Caco-2 (cell line): ENCODE measurements at regions of chr6 and their contacts with region 1.

Region 1: GRCh38 chr6:113306552-113307145 is 550.5 kb upstream of the MARCKS start:
- DNase-seq: peak; percentile 55 to 64
- H3K4me3 ChIP-seq: no peak overlapping the region
- H3K4me3 Mint-ChIP-seq: no peak overlapping the region
- H3K27ac Mint-ChIP-seq: no peak overlapping the region
- H3K4me1 ChIP-seq: peaks cover 6% of the 10 kb centered on the region; the same call in 1 of the 2 replicates
- H3K4me1 Mint-ChIP-seq: peaks cover 7% of the 10 kb centered on the region
- H3K27me3 ChIP-seq: no peaks in the 10 kb centered on the region
- H3K27me3 Mint-ChIP-seq: no peaks in the 10 kb centered on the region
- CTCF ChIP-seq: peak; percentile 64 to 68

Region 2: DNA sequence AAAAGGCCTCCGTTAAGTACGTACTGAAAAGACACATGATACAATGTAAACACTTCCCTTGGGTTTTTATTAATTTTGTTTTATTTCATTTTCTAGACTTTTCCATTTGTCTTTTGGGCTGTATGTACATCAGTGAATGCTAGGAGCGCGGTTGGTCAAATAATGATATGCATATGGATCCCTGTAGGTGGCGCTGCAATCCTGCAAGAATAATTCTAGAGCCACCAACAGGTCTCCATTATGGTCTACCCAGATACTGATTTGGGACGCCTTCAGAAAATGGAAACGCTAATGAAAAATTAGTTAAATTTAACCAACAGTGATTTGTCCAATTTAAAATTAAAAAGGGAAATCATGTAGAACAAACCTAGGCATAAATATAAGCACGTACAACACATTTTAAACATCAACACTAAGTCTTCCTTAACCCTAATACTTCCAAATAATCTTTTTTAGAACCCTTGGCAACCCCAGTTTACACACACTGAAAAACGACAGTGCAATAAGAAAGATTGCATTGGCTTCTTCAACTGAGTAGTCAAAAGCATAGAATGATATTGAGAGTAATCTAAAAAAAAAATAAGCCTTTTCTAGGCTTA is 526.1 kb before region 1 on chr6:
- CTCF ChIA-PET with region 1: no interaction called
- POLR2A ChIA-PET with region 1: no interaction called
- intact Hi-C with region 1: loop called (anchors 2 kb)
- DNase-seq: peak; percentile 62 to 74
- H3K4me3 ChIP-seq: no peak overlapping the region
- H3K4me3 Mint-ChIP-seq: no peak overlapping the region
- H3K27ac Mint-ChIP-seq: no peak overlapping the region
- H3K4me1 ChIP-seq: no peaks in the 10 kb centered on the region
- H3K4me1 Mint-ChIP-seq: no peaks in the 10 kb centered on the region
- H3K27me3 ChIP-seq: no peaks in the 10 kb centered on the region
- H3K27me3 Mint-ChIP-seq: peaks cover 5% of the 10 kb centered on the region
- CTCF ChIP-seq: peak; percentile 74 to 84

Region 3: GRCh38 chr6:113414511-113414910 is 107.9 kb after region 1 on chr6:
- CTCF ChIA-PET with region 1: no interaction called
- POLR2A ChIA-PET with region 1: no interaction called
- intact Hi-C with region 1: loop called (anchors 2 kb)
- DNase-seq: peak; percentile 39 to 45
- H3K4me3 ChIP-seq: no peak overlapping the region
- H3K4me3 Mint-ChIP-seq: no peak overlapping the region
- H3K27ac Mint-ChIP-seq: no peak overlapping the region
- H3K4me1 ChIP-seq: peaks cover 8% of the 10 kb centered on the region; the same call in 1 of the 2 replicates
- H3K4me1 Mint-ChIP-seq: peaks cover 13% of the 10 kb centered on the region
- H3K27me3 ChIP-seq: no peaks in the 10 kb centered on the region
- H3K27me3 Mint-ChIP-seq: no peaks in the 10 kb centered on the region
- CTCF ChIP-seq: peak in 1 of 2 experiments; percentile 50

Region 4: GRCh38 chr6:113461153-113461932 is 154.7 kb after region 1 on chr6:
- CTCF ChIA-PET with region 1: interaction called, 6 read pairs
- POLR2A ChIA-PET with region 1: no interaction called
- intact Hi-C with region 1: loop called (anchors 1 kb)
- DNase-seq: peak in 1 of 2 experiments; percentile 2
- H3K4me3 ChIP-seq: no peak overlapping the region
- H3K4me3 Mint-ChIP-seq: no peak overlapping the region
- H3K27ac Mint-ChIP-seq: no peak overlapping the region
- H3K4me1 ChIP-seq: 0 out of 2 replicates have a peak, but pooled peaks cover 3% of the 10 kb centered on the region
- H3K4me1 Mint-ChIP-seq: peaks cover 8% of the 10 kb centered on the region
- H3K27me3 ChIP-seq: no peaks in the 10 kb centered on the region
- H3K27me3 Mint-ChIP-seq: no peaks in the 10 kb centered on the region
- CTCF ChIP-seq: peak in 1 of 2 experiments; percentile 42

Region 5: DNA sequence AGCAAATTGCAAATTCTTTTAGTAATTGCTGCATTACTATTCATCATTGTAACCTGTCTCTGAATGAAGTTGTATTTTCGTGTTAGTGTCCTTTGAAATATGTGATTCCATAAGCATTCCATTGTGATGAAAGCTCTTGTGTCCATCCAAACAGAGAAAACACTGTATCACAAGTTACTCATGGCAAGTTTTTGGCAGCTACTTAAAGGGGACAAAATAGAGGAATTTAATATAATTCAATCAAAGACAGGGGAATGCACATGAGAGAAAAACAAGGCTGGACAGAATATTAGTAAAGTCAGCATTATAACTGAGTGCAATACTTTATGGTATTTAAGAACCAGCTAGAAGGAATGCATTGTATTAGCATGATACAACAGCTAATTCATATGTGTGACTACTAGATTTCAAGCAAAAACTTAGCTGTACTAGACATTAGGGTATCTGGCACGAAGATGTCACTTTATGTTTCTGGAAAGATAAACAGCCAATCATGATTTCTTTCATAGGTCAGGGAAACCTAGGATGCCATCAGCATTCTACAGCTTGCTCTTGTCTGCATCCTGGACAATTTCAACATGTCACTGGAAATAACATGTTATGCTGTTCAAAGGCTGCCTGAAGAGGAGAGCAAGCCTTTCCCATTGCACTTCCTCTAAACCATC is 279.9 kb after region 1 on chr6:
- CTCF ChIA-PET with region 1: no interaction called
- POLR2A ChIA-PET with region 1: no interaction called
- intact Hi-C with region 1: loop called (anchors 10 kb)
- DNase-seq: no peak
- H3K4me3 ChIP-seq: no peak overlapping the region
- H3K4me3 Mint-ChIP-seq: no peak overlapping the region
- H3K27ac Mint-ChIP-seq: no peak overlapping the region
- H3K4me1 ChIP-seq: no peaks in the 10 kb centered on the region
- H3K4me1 Mint-ChIP-seq: no peaks in the 10 kb centered on the region
- H3K27me3 ChIP-seq: no peaks in the 10 kb centered on the region
- H3K27me3 Mint-ChIP-seq: no peaks in the 10 kb centered on the region
- CTCF ChIP-seq: no peak